PC-9 (cell line): ENCODE measurements at regions of chr13 and their contacts with region 1.

Region 1: GRCh38 chr13:80342471-80343380 is 1.8 kb upstream of the SPRY2 start:
- DNase-seq: peak; percentile 37 to 87
- H3K4me3 ChIP-seq: peak overlapping the region; percentile 94
- H3K27ac ChIP-seq: no peak overlapping the region
- H3K4me1 ChIP-seq: peaks cover 7% of the 10 kb centered on the region
- H3K27me3 ChIP-seq: no peaks in the 10 kb centered on the region
- CTCF ChIP-seq: peak; percentile 85

Region 2: GRCh38 chr13:79541426-79542049 is 801.2 kb before region 1 on chr13:
- CTCF ChIA-PET with region 1: no interaction called
- POLR2A ChIA-PET with region 1: no interaction called
- intact Hi-C with region 1: loop called (anchors 10 kb)
- DNase-seq: peak in 1 of 2 experiments; percentile 46
- H3K4me3 ChIP-seq: no peak overlapping the region
- H3K27ac ChIP-seq: no peak overlapping the region
- H3K4me1 ChIP-seq: no peaks in the 10 kb centered on the region
- H3K27me3 ChIP-seq: no peaks in the 10 kb centered on the region
- CTCF ChIP-seq: peak; percentile 94

Region 3: DNA sequence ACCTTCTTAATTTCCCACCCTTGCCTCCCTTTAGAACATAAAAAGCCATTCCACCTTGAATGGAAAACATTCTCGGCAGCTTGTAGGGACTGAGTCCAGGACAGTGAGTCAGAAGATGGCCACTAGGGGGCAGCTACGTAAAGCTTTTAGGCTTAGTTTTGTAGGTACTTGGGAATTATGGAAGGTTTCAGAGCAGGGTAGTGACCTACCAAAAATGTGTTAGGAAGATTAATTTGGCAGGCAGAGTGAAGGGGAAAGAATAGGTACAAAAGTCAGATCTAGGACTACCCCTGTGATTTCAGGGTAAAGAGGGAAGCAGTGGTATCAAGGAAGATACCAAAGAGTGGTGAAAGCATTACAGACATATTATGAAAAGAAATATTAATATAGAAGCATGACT is 663.4 kb before region 1 on chr13:
- CTCF ChIA-PET with region 1: no interaction called
- POLR2A ChIA-PET with region 1: interaction called, 3 read pairs
- intact Hi-C with region 1: loop called (anchors 1 kb)
- DNase-seq: peak; percentile 38 to 45
- H3K4me3 ChIP-seq: no peak overlapping the region
- H3K27ac ChIP-seq: no peak overlapping the region
- H3K4me1 ChIP-seq: peaks cover 16% of the 10 kb centered on the region
- H3K27me3 ChIP-seq: no peaks in the 10 kb centered on the region
- CTCF ChIP-seq: peak; percentile 88

Region 4: GRCh38 chr13:79869326-79869725 is 473.4 kb before region 1 on chr13:
- CTCF ChIA-PET with region 1: no interaction called
- POLR2A ChIA-PET with region 1: no interaction called
- intact Hi-C with region 1: loop called (anchors 1 kb)
- DNase-seq: peak; percentile 32 to 85
- H3K4me3 ChIP-seq: no peak overlapping the region
- H3K27ac ChIP-seq: no peak overlapping the region
- H3K4me1 ChIP-seq: peaks cover 17% of the 10 kb centered on the region
- H3K27me3 ChIP-seq: no peaks in the 10 kb centered on the region
- CTCF ChIP-seq: no peak

Region 5: GRCh38 chr13:80030491-80030890 is 312.2 kb before region 1 on chr13:
- CTCF ChIA-PET with region 1: no interaction called
- POLR2A ChIA-PET with region 1: interaction called, 3 read pairs
- intact Hi-C with region 1: loop called (anchors 1 kb)
- DNase-seq: peak; percentile 77 to 80
- H3K4me3 ChIP-seq: no peak overlapping the region
- H3K27ac ChIP-seq: no peak overlapping the region
- H3K4me1 ChIP-seq: peaks cover 10% of the 10 kb centered on the region
- H3K27me3 ChIP-seq: no peaks in the 10 kb centered on the region
- CTCF ChIP-seq: peak; percentile 58

Region 6: DNA sequence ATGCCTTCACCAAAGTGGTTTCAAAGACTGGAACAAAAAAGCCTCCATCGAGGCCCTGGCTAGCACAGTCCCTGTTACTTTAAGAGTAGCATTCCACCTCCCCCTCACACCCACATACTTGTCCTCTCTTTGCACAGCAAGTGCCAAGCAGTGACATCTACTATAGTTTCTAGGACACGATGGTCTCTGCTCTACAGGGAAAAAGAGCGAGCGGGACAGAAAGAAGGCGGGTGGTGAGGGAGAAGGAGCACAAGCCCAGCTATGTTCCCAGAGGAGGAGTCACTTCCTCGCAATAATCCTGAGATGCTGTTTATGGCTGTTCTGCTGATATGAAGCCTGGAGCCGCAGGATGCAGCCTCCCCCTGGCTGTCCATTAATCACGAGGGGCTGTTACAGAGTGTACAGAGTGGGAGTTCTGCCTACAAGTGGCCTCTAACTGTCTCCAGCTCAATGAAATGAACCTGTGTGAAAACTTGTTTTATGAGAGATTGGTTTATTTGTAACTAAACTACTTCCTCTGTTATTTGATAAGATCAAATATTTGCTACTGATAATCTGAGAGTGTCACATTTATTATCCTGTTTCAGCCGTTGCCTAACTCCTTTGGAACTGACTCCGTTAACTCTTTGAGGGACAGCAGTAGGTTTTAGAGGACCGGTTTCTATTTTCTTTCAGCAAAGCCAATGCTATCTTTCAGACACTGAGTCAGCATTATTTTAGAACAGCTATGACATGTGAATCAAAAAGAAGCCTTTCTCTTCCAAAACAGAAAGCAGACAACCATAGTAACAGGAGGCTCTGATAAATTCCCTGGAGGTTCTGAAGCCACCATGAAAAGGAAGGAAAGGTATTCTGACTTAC is 209.8 kb before region 1 on chr13:
- CTCF ChIA-PET with region 1: no interaction called
- POLR2A ChIA-PET with region 1: no interaction called
- intact Hi-C with region 1: loop called (anchors 2 kb)
- DNase-seq: peak; percentile 36 to 81
- H3K4me3 ChIP-seq: peak overlapping the region; percentile 46
- H3K27ac ChIP-seq: peak overlapping the region; percentile 47
- H3K4me1 ChIP-seq: peaks cover 35% of the 10 kb centered on the region
- H3K27me3 ChIP-seq: no peaks in the 10 kb centered on the region
- CTCF ChIP-seq: no peak

Region 7: DNA sequence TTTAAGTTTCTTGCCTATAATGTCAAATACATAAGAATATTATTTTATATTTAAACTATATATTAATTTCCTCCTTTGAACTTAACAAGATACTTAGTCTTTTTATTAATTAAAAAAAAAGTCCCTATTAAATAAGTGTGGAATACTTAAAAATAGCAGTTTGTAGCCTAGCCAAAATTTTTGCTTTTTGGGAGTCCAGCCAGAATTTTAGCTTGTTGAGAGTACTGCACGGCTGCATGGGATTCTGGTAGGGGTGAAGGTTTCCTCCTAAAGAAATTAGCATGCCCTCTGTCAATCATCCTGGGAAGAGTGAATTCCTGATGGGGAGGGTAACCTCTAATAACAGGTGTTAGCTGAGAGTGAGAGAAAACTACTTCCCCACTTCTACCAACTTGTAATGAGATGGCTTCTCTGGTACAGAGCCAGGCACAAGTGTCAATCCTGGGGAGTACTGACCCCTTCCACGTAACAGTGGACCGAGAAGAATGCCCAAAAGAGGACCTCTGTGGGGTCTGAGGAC is 197.5 kb before region 1 on chr13:
- CTCF ChIA-PET with region 1: no interaction called
- POLR2A ChIA-PET with region 1: no interaction called
- intact Hi-C with region 1: no loop called
- DNase-seq: no peak
- H3K4me3 ChIP-seq: no peak overlapping the region
- H3K27ac ChIP-seq: no peak overlapping the region
- H3K4me1 ChIP-seq: no peaks in the 10 kb centered on the region
- H3K27me3 ChIP-seq: no peaks in the 10 kb centered on the region
- CTCF ChIP-seq: no peak

Region 8: DNA sequence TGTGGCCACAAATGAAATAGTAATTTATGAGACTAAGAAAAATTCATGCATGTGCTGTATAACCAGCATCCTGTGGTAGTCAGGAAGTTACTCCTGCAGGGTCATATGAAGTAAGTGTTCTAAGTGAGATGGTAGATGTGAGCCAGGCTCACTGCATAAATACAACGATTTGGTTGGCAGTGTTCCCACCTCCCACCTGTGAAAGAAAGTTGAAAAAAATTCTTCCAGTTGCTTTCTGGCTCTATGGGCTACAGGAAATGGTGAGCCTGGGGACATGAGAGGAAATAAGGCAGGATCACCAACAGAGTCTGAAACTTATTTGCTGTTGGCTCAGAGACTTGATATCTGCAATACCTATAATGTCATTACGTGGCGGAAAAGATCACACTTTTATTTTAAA is 299.9 kb after region 1 on chr13:
- CTCF ChIA-PET with region 1: no interaction called
- POLR2A ChIA-PET with region 1: no interaction called
- intact Hi-C with region 1: no loop called
- DNase-seq: no peak
- H3K4me3 ChIP-seq: no peak overlapping the region
- H3K27ac ChIP-seq: no peak overlapping the region
- H3K4me1 ChIP-seq: no peaks in the 10 kb centered on the region
- H3K27me3 ChIP-seq: no peaks in the 10 kb centered on the region
- CTCF ChIP-seq: no peak